ENCODE measurements at regions of chr10 and their contacts with region 1.

Region 1: DNA sequence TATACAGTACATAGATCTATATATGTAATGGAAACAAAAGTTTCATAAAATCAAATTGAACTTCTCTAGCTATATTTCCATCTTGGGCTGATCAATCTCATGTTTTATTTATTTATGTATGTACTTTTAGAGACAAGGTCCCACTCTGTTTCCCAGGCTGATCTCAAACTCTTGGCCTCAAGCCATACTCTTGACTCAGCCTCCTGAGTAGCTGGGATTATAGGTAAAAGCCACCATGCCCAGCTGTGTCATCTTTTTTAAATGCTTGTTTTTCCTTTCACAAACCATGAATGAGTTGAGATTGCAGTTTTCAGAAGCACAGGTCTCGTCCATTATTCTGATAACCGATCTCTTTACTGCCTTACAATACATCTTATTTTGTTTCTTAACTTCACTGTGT is 400.9 kb downstream of the KCNMA1 start:
- DNase-seq: no peak
- H3K4me3 ChIP-seq: no peak overlapping the region
- H3K27ac ChIP-seq: peak overlapping the region in 3 of 4 donors; percentile 85 to 91 (median 87)
- H3K4me1 ChIP-seq: peaks cover 0 to 75% (median 60%) of the 10 kb centered on the region in 4 donors
- H3K27me3 ChIP-seq: no peaks in the 10 kb centered on the region
- CTCF ChIP-seq: no peak
- EP300 ChIP-seq: no peak
- POLR2A ChIP-seq: no peak

Region 2: DNA sequence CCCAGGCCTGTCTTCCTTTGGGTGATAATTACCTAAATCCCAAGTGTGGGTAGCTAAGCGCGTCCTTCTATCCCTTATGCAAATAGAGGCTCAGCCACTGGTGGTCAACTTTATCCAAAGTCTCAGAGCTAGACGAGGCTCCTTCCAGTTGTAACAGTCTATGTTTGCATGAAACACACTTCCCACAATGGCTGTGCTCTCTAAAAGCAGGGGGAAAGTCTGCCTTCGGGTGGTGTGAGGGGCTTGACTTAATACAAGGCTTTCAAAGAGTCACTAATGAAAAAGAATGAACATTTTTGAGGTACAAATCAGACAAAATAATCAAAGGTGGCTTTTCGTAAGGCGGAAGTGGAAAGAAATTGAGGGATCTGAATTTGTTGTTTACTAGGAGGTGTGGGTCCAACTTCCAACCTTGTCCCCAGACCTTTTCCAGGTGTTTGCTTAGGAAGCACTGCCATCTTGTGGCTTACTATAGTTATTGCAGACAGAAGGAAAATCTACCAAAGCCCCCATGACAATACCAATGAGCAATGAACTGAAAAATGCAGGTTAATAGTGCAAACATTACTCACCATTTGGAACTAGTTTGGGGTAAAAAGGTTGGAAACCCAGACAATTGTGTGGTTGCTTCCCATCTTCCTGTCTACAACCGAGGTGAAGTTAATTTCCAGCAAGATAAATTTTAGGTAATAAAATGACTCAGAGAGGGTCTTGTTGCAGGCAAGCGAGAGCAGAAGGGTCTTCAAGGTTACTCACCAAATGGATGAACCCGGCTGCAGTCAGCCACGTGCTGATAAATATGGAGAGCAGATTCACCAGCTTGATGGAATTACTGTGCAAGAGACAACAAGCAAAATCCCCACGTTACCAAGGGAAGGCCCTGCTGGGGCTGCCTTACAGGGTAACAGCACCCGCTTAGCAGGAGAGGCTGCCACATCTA is 124.8 kb before region 1 on chr10:
- intact Hi-C with region 1: no loop called
- DNase-seq: no peak
- H3K4me3 ChIP-seq: no peak overlapping the region
- H3K27ac ChIP-seq: peak overlapping the region in 1 of 4 donors; percentile 23
- H3K4me1 ChIP-seq: peaks cover 0 to 26% (median 19%) of the 10 kb centered on the region in 4 donors
- H3K27me3 ChIP-seq: no peaks in the 10 kb centered on the region
- CTCF ChIP-seq: peak; percentile 65 to 82 (median 78)
- EP300 ChIP-seq: no peak
- POLR2A ChIP-seq: no peak

Region 3: GRCh38 chr10:77139252-77140160 is 97.2 kb before region 1 on chr10:
- intact Hi-C with region 1: no loop called
- DNase-seq: no peak
- H3K4me3 ChIP-seq: no peak overlapping the region
- H3K27ac ChIP-seq: no peak overlapping the region
- H3K4me1 ChIP-seq: peaks cover 0 to 33% (median 22%) of the 10 kb centered on the region in 4 donors
- H3K27me3 ChIP-seq: no peaks in the 10 kb centered on the region
- CTCF ChIP-seq: no peak
- EP300 ChIP-seq: no peak
- POLR2A ChIP-seq: no peak

Region 4: GRCh38 chr10:77274046-77274795 is 37.5 kb after region 1 on chr10:
- intact Hi-C with region 1: no loop called
- DNase-seq: peak; percentile 80
- H3K4me3 ChIP-seq: no peak overlapping the region
- H3K27ac ChIP-seq: peak overlapping the region in 3 of 4 donors; percentile 61 to 86 (median 78)
- H3K4me1 ChIP-seq: peaks cover 0 to 62% (median 44%) of the 10 kb centered on the region in 4 donors
- H3K27me3 ChIP-seq: no peaks in the 10 kb centered on the region
- CTCF ChIP-seq: no peak
- EP300 ChIP-seq: peak in 1 of 4 donors; percentile 39
- POLR2A ChIP-seq: no peak

Region 5: GRCh38 chr10:77564731-77565589 is 328.3 kb after region 1 on chr10:
- intact Hi-C with region 1: loop called (anchors 5 kb)
- DNase-seq: no peak
- H3K4me3 ChIP-seq: no peak overlapping the region
- H3K27ac ChIP-seq: peak overlapping the region; percentile 46 to 86 (median 76)
- H3K4me1 ChIP-seq: peaks cover 0 to 62% (median 59%) of the 10 kb centered on the region in 4 donors
- H3K27me3 ChIP-seq: no peaks in the 10 kb centered on the region
- CTCF ChIP-seq: no peak
- EP300 ChIP-seq: no peak
- POLR2A ChIP-seq: no peak

Measured in sigmoid colon (tissue), 7 donors.